HEK293 (cell line): ENCODE measurements at regions of chr1 and their contacts with region 1.

Region 1: GRCh38 chr1:11784993-11785769 is 20.6 kb downstream of the MTHFR start:
- H3K4me3 ChIP-seq: no peak overlapping the region
- H3K27ac ChIP-seq: no peak overlapping the region
- H3K4me1 ChIP-seq: no peaks in the 10 kb centered on the region
- CTCF ChIP-seq: peak; percentile 72

Region 2: DNA sequence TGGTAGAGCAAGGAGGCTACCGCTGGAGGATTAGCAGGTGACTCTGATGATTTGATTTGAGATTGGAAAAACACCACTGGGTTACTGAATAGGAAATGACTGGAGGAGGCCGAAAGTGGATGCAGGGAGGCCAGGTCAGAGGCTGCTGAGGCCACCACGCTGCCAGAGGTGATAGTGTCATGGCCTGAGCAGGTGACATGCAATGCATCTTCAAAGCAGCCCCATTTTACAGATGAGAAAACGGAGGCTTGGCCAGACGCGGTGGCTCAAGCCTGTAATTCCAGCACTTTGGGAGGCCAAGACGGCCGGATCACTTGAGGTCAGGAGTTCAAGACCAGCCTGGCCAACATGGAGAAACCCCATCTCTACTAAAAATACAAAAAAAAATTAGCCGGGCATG is 10.4 kb before region 1 on chr1:
- CTCF ChIA-PET with region 1: interaction called, 14 read pairs
- POLR2A ChIA-PET with region 1: no interaction called
- H3K4me3 ChIP-seq: no peak overlapping the region
- H3K27ac ChIP-seq: no peak overlapping the region
- H3K4me1 ChIP-seq: no peaks in the 10 kb centered on the region
- CTCF ChIP-seq: no peak

Region 3: DNA sequence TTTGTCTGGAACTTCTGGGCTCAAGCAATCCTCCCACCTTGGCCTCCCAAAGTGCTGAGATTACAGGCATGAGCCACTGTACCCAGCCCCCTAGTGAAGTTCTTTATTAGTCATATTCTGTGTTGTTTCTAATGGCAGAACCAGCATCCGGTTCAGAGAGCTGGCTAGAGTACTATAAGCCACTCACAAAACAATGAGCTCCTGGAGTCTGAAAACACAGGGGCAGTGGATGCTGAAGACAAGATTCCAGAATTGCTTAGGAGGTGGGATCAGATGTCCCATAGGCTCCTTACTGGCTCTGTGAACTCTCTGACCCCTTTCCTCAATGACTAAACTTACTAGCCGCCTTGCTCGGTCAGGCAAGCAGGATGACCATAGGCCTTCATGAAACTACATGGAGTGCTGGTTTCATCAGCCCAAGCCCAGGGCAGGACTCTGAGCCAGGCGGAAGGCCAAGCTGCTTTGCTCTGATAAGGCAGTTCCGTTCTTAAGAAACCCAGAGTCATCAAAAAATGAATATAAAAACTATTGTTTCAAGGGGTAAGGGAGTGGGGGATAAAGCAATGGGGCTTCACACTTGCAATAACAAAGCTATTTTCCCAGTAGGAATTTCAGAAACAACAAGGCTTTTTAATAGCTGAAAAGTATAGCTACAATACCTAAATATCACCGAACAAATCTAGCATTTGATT is 12.5 kb after region 1 on chr1:
- CTCF ChIA-PET with region 1: interaction called, 10 read pairs
- POLR2A ChIA-PET with region 1: interaction called, 9 read pairs
- H3K4me3 ChIP-seq: no peak overlapping the region
- H3K27ac ChIP-seq: no peak overlapping the region
- H3K4me1 ChIP-seq: no peaks in the 10 kb centered on the region
- CTCF ChIP-seq: no peak

Region 4: DNA sequence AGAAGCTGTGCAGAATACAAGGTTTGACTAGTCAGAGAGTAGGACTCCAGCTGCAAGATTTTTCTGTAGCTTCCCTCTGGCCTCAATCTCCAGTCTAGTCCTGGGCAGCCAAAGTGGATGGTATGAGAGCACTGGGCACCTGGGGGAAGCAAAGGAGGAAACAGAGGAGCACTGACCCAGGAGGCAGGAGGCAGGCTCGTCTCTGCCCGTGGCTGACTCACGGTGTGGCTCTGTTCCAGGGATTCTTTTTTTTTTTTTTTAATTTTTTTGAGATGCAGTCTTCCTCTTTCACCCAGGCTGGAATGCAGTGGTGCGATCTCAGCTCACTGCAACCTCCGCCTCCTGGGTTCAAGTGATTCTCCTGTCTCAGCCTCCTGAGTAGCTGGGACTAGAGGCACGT is 77.7 kb after region 1 on chr1:
- CTCF ChIA-PET with region 1: no interaction called
- POLR2A ChIA-PET with region 1: no interaction called
- H3K4me3 ChIP-seq: no peak overlapping the region
- H3K27ac ChIP-seq: no peak overlapping the region
- H3K4me1 ChIP-seq: no peaks in the 10 kb centered on the region
- CTCF ChIP-seq: no peak